BJ (cell line): ENCODE measurements at regions of chr19 and their contacts with region 1.

Region 1: DNA sequence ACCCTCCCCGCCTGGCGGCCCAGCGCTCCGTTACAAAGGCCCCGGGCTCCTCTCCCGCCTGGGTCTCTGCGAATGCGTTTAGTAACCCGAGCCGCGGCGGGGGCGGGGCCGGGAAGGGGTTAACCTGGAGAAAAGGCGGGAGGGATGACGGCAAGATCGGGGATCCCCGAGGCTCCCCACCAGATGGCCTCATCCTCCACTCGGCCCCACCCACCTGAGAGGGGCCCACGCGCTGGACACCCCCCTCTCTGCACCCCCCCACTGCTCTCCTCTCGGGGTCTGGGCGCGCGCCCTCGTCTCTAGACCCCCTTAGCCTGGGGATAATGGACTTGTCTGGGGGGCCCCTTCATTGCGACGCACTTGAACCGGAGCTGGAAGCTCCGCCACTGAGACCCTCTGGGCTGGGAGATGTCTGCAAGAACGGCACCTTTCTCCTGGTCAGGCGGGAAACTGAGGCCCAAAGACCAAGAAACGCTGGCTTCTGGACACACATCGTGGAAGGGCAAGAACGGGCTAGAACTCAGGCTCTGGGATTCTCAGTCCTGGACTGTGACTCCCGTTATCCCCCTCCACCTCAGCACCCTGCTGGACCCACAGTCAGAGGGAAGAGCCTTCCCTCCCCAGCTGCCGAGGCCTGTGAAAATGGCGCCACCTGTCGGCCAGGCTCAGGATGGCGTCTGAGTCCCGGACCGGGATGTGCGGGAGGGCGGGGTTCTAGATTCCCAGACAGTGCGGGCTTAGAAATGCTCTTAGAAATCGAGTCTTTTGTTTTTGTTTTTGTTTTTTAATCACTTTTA is 2.9 kb upstream of the LTBP4 start:
- DNase-seq: no peak
- H3K4me3 ChIP-seq: peak overlapping the region; percentile 37
- H3K27me3 ChIP-seq: 0 out of 2 replicates have a peak, but pooled peaks cover 2% of the 10 kb centered on the region
- CTCF ChIP-seq: peak; percentile 99

Region 2: GRCh38 chr19:40570313-40571004 is 27.9 kb before region 1 on chr19:
- CTCF ChIA-PET with region 1: interaction called, 16 read pairs
- POLR2A ChIA-PET with region 1: no interaction called
- DNase-seq: peak; percentile 97
- H3K4me3 ChIP-seq: peak overlapping the region; percentile 66
- H3K27me3 ChIP-seq: peaks cover 2% of the 10 kb centered on the region; the same call in 1 of the 2 replicates
- CTCF ChIP-seq: peak; percentile 66

Region 3: GRCh38 chr19:40671404-40671803 is 73.1 kb after region 1 on chr19:
- CTCF ChIA-PET with region 1: no interaction called
- POLR2A ChIA-PET with region 1: no interaction called
- DNase-seq: no peak
- H3K4me3 ChIP-seq: no peak overlapping the region
- H3K27me3 ChIP-seq: no peaks in the 10 kb centered on the region
- CTCF ChIP-seq: no peak

Region 4: DNA sequence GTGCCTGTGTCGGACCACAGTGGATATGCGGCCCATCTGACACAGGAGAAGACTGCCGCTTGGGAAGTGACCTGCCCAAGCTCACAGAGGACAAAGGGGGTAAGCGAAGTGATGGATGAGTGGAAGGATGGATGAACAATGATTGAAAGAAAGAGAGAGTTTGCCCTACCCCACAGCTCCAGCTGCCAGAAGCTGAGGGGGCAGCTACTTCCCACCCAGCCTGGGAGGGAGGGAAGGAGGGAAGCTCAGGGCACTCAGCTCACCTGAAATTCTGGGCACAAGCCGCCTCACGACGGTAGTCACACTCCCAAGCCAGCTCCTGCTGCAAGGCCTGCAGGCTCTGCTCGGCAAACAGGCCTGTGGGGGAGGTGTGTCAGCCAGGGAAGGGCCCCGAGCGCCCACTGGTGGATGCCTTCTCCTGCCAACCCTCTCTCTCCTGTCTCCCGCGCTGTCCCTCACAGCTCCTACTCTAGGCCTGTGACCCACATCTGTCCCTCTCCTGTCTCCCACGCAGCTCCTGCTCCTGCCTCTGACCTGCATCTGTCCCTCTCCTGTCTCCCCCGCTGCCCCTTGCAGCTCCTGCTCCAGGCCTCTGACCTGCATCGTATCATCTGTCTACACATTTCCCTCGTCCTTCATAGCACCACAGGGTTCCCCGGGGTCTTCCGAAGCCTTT is 104.2 kb after region 1 on chr19:
- CTCF ChIA-PET with region 1: no interaction called
- POLR2A ChIA-PET with region 1: no interaction called
- DNase-seq: no peak
- H3K4me3 ChIP-seq: no peak overlapping the region
- H3K27me3 ChIP-seq: no peaks in the 10 kb centered on the region
- CTCF ChIP-seq: peak; percentile 55